PC-3 (cell line): ENCODE measurements at regions of chr6 and their contacts with region 1.

Region 1: GRCh38 chr6:38871741-38872568 is 156.8 kb downstream of the DNAH8 start:
- DNase-seq: peak; percentile 76
- ATAC-seq: peak; percentile 72
- H3K4me3 ChIP-seq: no peak overlapping the region
- H3K27ac ChIP-seq: no peak overlapping the region
- H3K4me1 ChIP-seq: no peaks in the 10 kb centered on the region; the same call in 1 of the 2 replicates
- H3K27me3 ChIP-seq: 0 out of 2 replicates have a peak, but pooled peaks cover 5% of the 10 kb centered on the region
- CTCF ChIP-seq: peak; percentile 98

Region 2: GRCh38 chr6:38396209-38396608 is 475.7 kb before region 1 on chr6:
- CTCF ChIA-PET with region 1: no interaction called
- POLR2A ChIA-PET with region 1: no interaction called
- intact Hi-C with region 1: no loop called
- DNase-seq: peak; percentile 41
- ATAC-seq: no peak
- H3K4me3 ChIP-seq: no peak overlapping the region
- H3K27ac ChIP-seq: no peak overlapping the region
- H3K4me1 ChIP-seq: peaks cover 19% of the 10 kb centered on the region
- H3K27me3 ChIP-seq: no peaks in the 10 kb centered on the region
- CTCF ChIP-seq: no peak

Region 3: DNA sequence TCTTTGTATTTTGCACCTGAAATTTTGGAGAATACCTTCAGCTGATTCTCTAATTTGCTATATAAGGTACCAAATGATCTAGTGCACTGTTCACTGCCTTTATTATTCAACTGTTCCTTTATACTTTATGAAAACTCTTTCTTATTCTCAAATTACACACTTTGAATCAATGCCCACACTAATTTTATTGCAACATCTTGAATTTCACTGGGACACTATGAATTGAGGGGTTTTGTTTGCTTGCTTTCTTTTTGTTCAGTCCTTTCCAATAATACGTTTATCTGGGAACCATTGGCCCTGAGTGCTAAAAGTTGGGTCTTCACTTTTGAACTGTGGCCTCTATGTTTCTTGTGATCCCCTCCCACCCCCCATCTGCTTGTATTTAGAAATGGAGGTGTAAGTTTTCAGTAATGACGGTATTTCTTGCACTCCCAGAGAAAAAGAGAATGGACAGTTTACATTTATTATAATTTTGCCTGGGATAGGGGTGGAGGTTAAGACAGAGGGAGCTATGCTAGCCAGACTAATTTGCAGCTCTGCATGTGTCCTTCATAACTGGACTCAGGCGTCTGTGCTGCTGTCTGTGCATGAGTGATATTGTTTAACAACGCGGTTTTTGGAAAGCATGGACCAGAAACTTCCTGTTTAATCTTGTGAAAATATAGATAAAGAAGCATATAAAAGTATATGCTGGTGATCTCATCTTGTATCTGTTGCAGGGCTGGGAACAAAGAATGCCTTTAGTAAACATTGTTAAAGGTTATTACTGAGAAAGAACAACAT is 58.7 kb before region 1 on chr6:
- CTCF ChIA-PET with region 1: no interaction called
- POLR2A ChIA-PET with region 1: no interaction called
- intact Hi-C with region 1: loop called (anchors 10 kb)
- DNase-seq: peak; percentile 84
- ATAC-seq: peak; percentile 95
- H3K4me3 ChIP-seq: peak overlapping the region; percentile 46
- H3K27ac ChIP-seq: peak overlapping the region; percentile 85
- H3K4me1 ChIP-seq: peaks cover 29% of the 10 kb centered on the region
- H3K27me3 ChIP-seq: peaks cover 8% of the 10 kb centered on the region; the same call in 1 of the 2 replicates
- CTCF ChIP-seq: no peak

Region 4: DNA sequence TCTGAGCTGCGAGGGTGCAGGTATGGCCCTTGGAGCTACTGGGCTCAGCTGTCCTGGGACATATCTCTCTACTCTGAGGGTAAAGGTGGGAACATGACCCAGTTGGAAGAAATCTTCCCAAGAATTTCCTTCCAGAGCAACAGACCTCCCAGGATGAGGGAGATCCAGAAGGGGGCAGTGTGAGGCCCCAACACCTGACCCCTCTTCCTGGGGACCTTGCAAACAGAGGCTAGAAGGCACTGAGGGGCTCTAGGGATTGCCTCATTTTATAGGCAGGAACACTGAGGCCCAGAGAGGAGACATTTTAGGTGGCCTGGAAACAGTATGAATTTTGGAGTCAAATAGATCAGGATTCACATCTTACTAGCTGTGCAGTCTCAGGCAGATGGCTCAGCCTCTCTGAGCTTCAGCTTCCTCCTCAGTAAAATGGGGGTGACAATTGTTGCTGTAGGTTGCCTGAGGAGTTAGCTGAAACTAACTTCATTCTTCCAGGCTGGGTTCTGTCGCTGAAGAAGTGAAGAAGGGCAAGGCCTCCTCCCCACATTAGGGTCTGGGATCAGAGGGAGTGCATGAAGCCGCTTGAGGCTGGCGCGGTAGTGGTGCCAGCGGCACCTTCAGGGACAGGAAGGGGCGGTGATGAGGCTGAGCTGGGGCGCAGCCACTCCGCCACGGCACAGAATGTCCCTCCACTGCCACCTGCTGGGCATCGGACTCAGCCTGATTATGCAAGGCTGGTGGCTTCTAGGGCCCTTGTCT is 430.9 kb after region 1 on chr6:
- CTCF ChIA-PET with region 1: no interaction called
- POLR2A ChIA-PET with region 1: no interaction called
- intact Hi-C with region 1: loop called (anchors 2 kb)
- DNase-seq: peak; percentile 86
- ATAC-seq: peak; percentile 98
- H3K4me3 ChIP-seq: no peak overlapping the region
- H3K27ac ChIP-seq: no peak overlapping the region
- H3K4me1 ChIP-seq: 0 out of 2 replicates have a peak, but pooled peaks cover 2% of the 10 kb centered on the region
- H3K27me3 ChIP-seq: peaks cover 24% of the 10 kb centered on the region
- CTCF ChIP-seq: peak; percentile 89

Region 5: DNA sequence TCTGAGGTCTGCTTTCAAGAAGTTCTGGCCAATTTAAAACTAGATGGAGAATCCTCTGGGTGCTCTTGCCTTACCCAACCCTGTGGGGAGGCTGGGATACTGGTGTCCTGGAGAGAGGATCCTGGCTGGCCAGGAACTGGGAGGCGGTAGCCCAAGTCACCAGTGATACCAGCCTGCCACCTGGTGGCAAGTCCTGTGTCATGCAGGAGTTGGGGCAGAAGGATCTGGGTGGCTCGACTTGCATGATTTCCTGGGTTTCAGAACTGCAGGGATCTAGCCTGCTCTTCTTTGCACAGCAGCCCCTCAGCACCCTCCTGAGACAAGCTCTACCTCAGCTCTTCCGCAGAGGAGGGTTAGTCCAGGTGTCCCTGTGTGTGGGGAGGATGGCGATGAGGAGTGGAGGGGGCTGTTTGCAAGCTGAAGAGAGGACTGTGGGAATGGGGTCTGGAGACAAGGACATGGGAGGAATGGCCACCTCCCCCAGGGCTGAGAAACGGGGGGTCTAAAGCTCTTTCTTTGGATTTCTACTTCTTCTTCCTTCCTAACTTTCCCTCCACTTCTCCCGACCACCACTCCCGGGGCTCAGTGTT is 438.1 kb after region 1 on chr6:
- CTCF ChIA-PET with region 1: no interaction called
- POLR2A ChIA-PET with region 1: no interaction called
- intact Hi-C with region 1: loop called (anchors 2 kb)
- DNase-seq: peak; percentile 86
- ATAC-seq: peak; percentile 96
- H3K4me3 ChIP-seq: no peak overlapping the region
- H3K27ac ChIP-seq: no peak overlapping the region
- H3K4me1 ChIP-seq: no peaks in the 10 kb centered on the region
- H3K27me3 ChIP-seq: peaks cover 20% of the 10 kb centered on the region
- CTCF ChIP-seq: peak; percentile 93